ENCODE measurements at regions of chr9 and their contacts with region 1.

Region 1: DNA sequence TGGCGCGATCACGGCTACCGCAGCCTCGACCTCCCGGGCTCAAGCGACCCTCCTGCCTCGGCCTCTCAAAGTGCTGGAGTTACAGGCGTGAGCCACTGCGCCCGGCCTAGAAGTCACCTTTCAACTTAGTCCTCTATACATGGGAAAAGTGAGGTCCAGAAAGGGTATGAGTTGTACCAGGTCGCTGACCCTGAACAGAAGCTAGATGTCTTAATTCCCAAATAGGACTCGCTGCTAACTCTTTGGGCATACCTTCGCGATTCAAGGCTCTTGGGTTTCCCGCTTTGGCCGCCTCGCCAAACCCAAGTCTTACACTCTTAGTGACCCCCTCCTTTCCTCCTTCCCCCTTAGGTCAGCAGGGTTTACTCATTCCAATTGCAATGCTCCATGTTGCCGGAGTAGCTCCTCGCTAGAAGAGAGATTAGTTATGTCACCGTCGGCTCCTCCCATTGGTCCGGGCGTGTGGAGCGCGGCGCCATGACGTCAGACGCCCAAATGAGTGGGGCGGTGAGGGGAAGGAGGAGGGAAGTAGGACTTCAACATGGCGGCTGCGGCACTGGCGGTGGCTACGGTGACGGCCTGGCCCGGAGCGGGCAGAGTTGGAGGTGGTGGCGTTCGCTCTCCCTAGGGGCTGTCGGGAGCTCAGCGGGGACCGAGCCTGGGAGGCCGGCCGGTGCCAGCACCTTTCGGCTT is at the start of gene UBAP1:
- DNase-seq: peak; percentile 96 to 98
- ATAC-seq: peak; percentile 97 to 100 (median 99)
- H3K4me3 ChIP-seq: peak within 1 kb of the TSS; percentile 78
- H3K27ac ChIP-seq: peak within 1 kb of the TSS; percentile 83
- H3K4me1 ChIP-seq: peaks cover 4% of the 10 kb centered on the region
- H3K27me3 ChIP-seq: no peaks in the 10 kb centered on the region
- CTCF ChIP-seq: no peak
- total RNA-seq, gene UBAP1: 55.8 to 126 (median 73.4) TPM

Region 2: GRCh38 chr9:34126207-34127034 is 52.2 kb before region 1 on chr9 and contains the start of gene DCAF12:
- intact Hi-C with region 1: loop called (anchors 2 to 5 kb)
- DNase-seq: peak; percentile 92 to 96
- ATAC-seq: peak; percentile 98 to 99 (median 98)
- H3K4me3 ChIP-seq: peak within 1 kb of the TSS; percentile 83
- H3K27ac ChIP-seq: peak within 1 kb of the TSS; percentile 97
- H3K4me1 ChIP-seq: peaks cover 31% of the 10 kb centered on the region
- H3K27me3 ChIP-seq: no peaks in the 10 kb centered on the region
- CTCF ChIP-seq: peak; percentile 15
- total RNA-seq, gene DCAF12: 18.0 to 27.1 (median 23.3) TPM